ENCODE measurements at regions of chr4 and their contacts with region 1.

Region 1: GRCh38 chr4:183059797-183060196 is 39.3 kb upstream of the WWC2 start:
- DNase-seq: no peak
- H3K4me3 ChIP-seq: no peak overlapping the region
- H3K27ac ChIP-seq: no peak overlapping the region
- H3K4me1 ChIP-seq: no peaks in the 10 kb centered on the region
- H3K27me3 ChIP-seq: no peaks in the 10 kb centered on the region
- CTCF ChIP-seq: no peak

Region 2: DNA sequence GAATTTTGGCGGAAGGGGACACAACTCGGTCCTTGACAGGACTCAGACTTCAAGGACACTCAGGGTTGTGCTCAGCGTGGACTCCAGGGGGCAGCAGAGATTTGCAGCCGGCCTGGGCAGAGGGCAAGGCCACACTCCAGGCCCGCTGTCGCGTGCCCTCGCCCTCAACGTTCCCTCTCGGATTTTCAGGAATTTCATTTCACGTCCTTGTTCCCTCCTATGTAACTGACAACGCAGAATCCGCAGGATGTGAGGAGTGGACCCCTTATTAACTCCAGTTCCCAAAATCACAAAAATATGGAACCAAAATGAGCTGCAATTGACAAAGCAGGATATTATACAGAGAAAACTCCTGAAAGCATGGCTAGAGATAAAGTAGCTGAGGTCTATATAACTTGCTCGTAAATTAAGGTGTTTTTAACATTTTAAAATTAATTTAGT is 121.6 kb before region 1 on chr4:
- intact Hi-C with region 1: loop called (anchors 10 kb)
- DNase-seq: peak; percentile 61 to 79
- H3K4me3 ChIP-seq: no peak overlapping the region
- H3K27ac ChIP-seq: no peak overlapping the region
- H3K4me1 ChIP-seq: no peaks in the 10 kb centered on the region
- H3K27me3 ChIP-seq: peaks cover 0 to 6% of the 10 kb centered on the region in 2 donors
- CTCF ChIP-seq: peak; percentile 80 to 94

Region 3: GRCh38 chr4:183355405-183355804 is 295.6 kb after region 1 on chr4:
- intact Hi-C with region 1: no loop called
- DNase-seq: no peak
- H3K4me3 ChIP-seq: no peak overlapping the region
- H3K27ac ChIP-seq: no peak overlapping the region
- H3K4me1 ChIP-seq: no peaks in the 10 kb centered on the region
- H3K27me3 ChIP-seq: peaks cover 0 to 2% of the 10 kb centered on the region in 2 donors
- CTCF ChIP-seq: no peak

Measured in tibial artery (tissue), 4 donors.